ENCODE measurements at regions of chr5 and their contacts with region 1.

Region 1: DNA sequence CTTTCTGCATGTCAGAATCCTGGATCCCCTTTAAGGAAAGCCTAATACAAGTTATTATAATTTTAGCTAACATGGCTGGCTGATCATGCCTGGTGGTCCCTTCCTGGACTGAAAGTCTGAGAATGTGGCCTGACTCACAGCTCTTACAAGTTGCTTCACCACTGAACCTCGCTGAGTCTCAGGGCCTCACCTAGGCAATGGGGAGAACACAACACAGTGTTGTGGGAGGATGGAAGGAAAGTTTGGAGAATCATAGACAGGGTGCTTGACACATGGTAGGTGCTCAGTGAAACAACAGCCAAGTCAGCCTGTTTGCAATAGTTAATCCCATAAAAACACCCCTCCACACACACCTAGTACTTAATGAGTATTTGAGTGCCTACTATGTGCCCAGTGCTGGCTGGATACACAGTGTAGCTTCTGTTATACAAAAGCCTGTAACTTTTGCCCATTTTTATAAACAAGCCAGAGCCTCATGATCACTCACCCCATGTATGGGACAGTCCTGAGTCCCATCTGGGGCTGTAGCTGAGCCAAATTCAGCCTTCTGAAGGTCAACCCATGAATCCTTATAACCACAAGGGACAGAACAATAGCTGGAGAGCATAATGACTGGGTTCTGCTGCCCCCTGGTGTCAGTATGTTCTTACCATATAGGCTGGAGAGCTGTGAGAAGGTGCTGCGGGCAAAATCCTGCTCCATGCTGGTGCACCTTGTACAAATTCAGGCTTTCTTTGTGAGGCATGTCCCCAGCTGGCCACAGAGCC is 3.9 kb downstream of the ACSL6 start:
- DNase-seq: peak; percentile 87
- ATAC-seq: peak; percentile 63
- H3K4me3 Mint-ChIP-seq: no peak overlapping the region
- H3K27ac Mint-ChIP-seq: peak overlapping the region; percentile 44
- H3K4me1 Mint-ChIP-seq: peaks cover 43% of the 10 kb centered on the region
- H3K27me3 Mint-ChIP-seq: peaks cover 34% of the 10 kb centered on the region

Region 2: DNA sequence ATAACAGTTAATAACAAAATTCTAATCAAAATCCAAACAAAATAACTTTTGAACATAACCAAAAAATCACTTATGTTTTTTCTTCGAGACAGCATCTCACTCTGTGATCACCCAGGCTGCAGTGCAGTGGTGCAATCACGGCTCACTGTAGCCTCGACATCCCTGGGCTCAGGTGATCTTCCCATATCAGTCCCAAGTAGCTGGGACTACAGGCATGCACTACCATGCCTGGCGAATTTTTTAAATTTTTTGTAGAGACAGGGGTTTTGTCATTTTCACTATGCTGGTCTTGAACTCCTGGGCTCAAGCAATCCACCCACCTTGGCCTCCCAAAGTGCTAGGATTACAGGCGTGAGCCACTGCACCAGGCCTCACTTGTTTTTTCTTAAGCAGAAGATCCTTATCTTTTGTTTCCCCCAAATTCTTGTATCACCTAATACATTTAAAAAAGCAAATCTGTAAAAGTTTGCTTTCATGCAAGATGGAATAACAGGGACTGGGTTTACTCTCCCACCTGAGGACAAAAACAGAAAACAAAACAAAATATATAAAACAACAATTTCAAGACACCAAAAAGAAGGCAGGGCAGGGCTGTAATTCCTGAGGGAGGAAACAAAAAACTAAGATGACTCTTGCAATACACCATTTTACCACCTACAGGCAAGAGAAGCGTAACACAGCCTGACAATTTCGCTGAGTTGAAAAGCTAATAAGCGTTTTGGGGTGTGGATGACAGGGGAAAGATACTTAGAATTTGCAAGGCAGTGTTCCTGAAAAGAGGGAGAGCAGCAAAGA is 444.0 kb before region 1 on chr5:
- CTCF ChIA-PET with region 1: interaction called, 12 read pairs
- POLR2A ChIA-PET with region 1: no interaction called
- DNase-seq: no peak
- ATAC-seq: no peak
- H3K4me3 Mint-ChIP-seq: no peak overlapping the region
- H3K27ac Mint-ChIP-seq: no peak overlapping the region
- H3K4me1 Mint-ChIP-seq: peaks cover 7% of the 10 kb centered on the region
- H3K27me3 Mint-ChIP-seq: no peaks in the 10 kb centered on the region

Region 3: GRCh38 chr5:131595088-131596033 is 412.2 kb before region 1 on chr5:
- CTCF ChIA-PET with region 1: interaction called, 169 read pairs
- POLR2A ChIA-PET with region 1: no interaction called
- DNase-seq: peak; percentile 59
- ATAC-seq: peak; percentile 92
- H3K4me3 Mint-ChIP-seq: peak overlapping the region; percentile 53
- H3K27ac Mint-ChIP-seq: peak overlapping the region; percentile 88
- H3K4me1 Mint-ChIP-seq: peaks cover 38% of the 10 kb centered on the region
- H3K27me3 Mint-ChIP-seq: no peaks in the 10 kb centered on the region

Region 4: DNA sequence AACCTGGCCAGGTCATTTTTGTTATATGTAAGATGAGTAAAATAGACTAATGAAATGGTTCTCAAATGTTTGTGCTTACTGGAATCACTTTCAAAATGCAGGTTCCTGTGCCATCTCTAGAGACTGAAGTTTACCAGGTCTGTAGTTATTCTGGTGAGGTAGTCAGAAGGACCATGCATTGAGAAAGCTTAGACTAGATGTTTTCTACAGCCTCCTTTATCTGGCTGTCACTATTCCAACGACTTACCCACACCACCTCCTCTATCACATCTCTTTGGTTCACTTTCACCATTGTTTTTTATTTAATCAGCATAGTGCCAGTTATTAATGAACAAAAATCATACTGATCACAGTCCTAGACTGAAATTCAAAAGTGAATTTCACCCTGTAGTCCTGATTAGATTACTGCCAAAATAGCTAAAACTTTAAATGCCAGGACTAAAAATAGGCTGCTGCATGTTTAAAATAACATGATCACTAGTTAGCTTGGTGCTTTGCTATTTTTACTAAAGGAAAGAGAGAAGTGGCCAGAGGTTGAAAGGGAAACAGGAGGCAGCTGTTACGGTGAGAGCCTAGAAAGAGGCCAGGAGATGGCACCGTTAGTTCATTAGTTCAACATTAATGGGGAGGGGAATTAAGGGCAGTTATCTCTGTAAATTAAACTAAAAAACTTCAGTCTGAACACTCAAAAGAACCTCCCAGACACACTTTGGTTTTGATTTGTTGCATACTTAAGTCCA is 196.9 kb before region 1 on chr5:
- CTCF ChIA-PET with region 1: interaction called, 43 read pairs
- POLR2A ChIA-PET with region 1: no interaction called
- DNase-seq: peak; percentile 42
- ATAC-seq: no peak
- H3K4me3 Mint-ChIP-seq: no peak overlapping the region
- H3K27ac Mint-ChIP-seq: no peak overlapping the region
- H3K4me1 Mint-ChIP-seq: no peaks in the 10 kb centered on the region
- H3K27me3 Mint-ChIP-seq: peaks cover 8% of the 10 kb centered on the region

Region 5: GRCh38 chr5:132019857-132020555 is 12.4 kb after region 1 on chr5:
- CTCF ChIA-PET with region 1: interaction called, 23 read pairs
- POLR2A ChIA-PET with region 1: no interaction called
- DNase-seq: peak; percentile 93
- ATAC-seq: peak; percentile 96
- H3K4me3 Mint-ChIP-seq: peak overlapping the region; percentile 63
- H3K27ac Mint-ChIP-seq: peak overlapping the region; percentile 93
- H3K4me1 Mint-ChIP-seq: peaks cover 69% of the 10 kb centered on the region
- H3K27me3 Mint-ChIP-seq: peaks cover 38% of the 10 kb centered on the region

Region 6: DNA sequence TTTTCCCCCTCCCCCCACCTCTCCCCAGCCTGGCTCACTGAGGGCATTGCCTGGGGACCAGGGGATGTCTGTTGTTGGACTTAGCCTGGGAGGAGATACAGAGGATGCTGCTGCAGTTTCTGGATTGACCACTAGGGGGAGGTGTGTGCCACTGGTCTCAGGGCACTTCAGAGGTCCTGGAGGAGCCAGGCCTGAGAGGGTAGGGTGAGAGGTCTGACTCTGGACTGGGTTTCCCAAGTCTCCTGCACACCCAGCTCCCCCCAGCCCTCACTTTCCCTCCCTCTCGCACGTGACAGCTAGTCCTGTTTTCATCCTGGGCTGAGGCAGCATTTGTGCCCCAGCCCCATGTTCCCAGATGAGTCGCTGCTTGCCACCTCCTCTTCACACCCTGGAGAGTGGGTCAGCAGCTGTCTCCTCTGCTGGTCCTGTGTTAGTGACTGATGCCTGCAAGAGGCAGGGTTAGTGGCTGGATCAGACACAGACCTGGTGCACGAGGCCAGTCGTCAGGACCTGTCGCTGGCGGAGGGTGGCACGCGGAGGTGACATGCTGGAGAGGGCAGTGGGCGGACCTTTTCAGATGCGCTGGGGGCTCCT is 57.3 kb after region 1 on chr5:
- CTCF ChIA-PET with region 1: interaction called, 29 read pairs
- POLR2A ChIA-PET with region 1: no interaction called
- DNase-seq: peak; percentile 90
- ATAC-seq: peak; percentile 73
- H3K4me3 Mint-ChIP-seq: no peak overlapping the region
- H3K27ac Mint-ChIP-seq: peak overlapping the region; percentile 57
- H3K4me1 Mint-ChIP-seq: peaks cover 56% of the 10 kb centered on the region
- H3K27me3 Mint-ChIP-seq: no peaks in the 10 kb centered on the region